ENCODE measurements at regions of chr15 and their contacts with region 1.

Region 1: GRCh38 chr15:99628374-99629001 is 62.7 kb downstream of the MEF2A start:
- DNase-seq: no peak

Region 2: DNA sequence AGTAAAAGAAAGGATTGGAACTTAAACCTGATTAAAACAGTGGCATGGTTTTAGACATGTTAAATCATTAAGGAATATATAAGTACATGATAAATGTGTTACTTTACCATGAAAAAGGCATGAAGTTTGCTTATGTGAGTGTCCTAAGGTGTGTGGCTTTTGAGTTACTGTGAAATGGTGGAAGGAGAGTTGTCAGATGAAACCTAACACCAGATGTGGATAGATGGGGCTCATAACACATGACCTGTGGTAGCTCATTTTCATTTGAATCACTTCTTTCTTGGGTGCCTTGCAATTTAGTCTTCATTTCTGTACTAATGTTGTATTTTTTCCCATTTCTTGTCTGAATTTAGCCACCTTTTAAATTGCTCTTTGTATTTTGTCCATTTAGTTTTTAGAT is 49.7 kb before region 1 on chr15:
- intact Hi-C with region 1: loop called (anchors 5 kb)
- DNase-seq: no peak